ENCODE measurements at regions of chr11 and their contacts with region 1.

Region 1: GRCh38 chr11:59186130-59186594 is 14.2 kb downstream of the DTX4 start:
- DNase-seq: peak; percentile 95
- H3K4me3 Mint-ChIP-seq: peak overlapping the region; percentile 72
- H3K27ac Mint-ChIP-seq: peak overlapping the region; percentile 94
- H3K4me1 Mint-ChIP-seq: peaks cover 82% of the 10 kb centered on the region
- H3K27me3 Mint-ChIP-seq: no peaks in the 10 kb centered on the region
- CTCF ChIP-seq: peak; percentile 91

Region 2: GRCh38 chr11:58845366-58845765 is 340.8 kb before region 1 on chr11:
- CTCF ChIA-PET with region 1: no interaction called
- intact Hi-C with region 1: no loop called
- DNase-seq: no peak
- H3K4me3 Mint-ChIP-seq: no peak overlapping the region
- H3K27ac Mint-ChIP-seq: no peak overlapping the region
- H3K4me1 Mint-ChIP-seq: peaks cover 12% of the 10 kb centered on the region
- H3K27me3 Mint-ChIP-seq: peaks cover 12% of the 10 kb centered on the region
- CTCF ChIP-seq: no peak

Region 3: DNA sequence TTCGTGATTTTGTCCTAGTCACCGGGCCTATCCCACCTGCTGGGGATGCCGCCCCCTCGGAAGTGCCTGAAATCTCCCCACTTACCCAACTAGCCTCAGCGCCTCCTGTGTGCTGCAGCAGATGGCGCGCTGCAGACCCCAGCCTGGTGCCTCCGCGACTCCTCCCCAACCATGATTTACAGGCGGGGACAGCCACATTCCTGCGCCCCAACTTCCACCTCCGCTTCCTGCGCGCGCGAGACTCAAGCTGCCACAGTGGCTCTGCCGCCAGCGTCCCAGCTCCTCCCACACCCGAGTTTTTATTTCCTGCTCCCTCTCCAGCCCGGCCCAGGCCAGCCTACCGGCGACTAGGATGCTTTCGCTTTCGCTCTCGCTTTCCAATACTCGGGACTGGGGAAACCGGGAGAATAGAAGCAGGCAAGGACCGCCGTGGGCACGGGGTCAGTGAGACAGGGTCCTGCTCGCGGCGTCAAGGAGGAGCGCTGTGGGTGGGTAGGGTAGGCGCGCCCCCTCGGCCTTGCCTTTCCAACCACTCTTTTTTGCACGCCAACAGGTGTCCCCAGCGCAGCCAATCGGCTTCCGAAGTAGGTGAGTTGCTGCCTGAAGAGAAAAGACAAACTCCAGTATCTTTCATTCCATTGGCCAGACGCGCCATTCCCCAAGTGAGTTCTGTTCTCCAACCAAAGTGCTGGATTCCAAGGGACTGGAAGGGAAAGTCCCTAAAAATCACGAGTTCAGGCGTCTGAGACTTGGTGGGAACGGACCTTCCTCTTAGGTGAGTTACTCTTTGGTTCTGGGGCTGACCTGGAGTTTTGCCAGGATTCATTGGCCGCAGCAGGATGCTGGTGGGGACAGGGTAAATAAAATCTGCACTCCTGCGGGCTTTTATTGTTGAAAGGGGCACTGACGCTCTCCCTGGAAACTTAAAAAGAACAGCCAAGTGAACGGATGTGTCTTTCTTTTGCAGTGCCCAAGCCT is 43.3 kb before region 1 on chr11 and contains the start of gene FAM111A:
- CTCF ChIA-PET with region 1: interaction called, 10 read pairs
- intact Hi-C with region 1: no loop called
- DNase-seq: peak; percentile 88
- H3K4me3 Mint-ChIP-seq: peak within 1 kb of the TSS; percentile 97
- H3K27ac Mint-ChIP-seq: peak within 1 kb of the TSS; percentile 93
- H3K4me1 Mint-ChIP-seq: peaks cover 48% of the 10 kb centered on the region
- H3K27me3 Mint-ChIP-seq: no peaks in the 10 kb centered on the region
- CTCF ChIP-seq: peak; percentile 14
- total RNA-seq, gene FAM111A: 87.9 and 91.6 TPM in 2 replicates

Region 4: GRCh38 chr11:59171508-59172322 is 14.4 kb before region 1 on chr11 and contains the start of gene DTX4:
- CTCF ChIA-PET with region 1: interaction called, 137 read pairs
- intact Hi-C with region 1: loop called (anchors 1 kb)
- DNase-seq: peak; percentile 96
- H3K4me3 Mint-ChIP-seq: no peak within 1 kb of the TSS
- H3K27ac Mint-ChIP-seq: peak within 1 kb of the TSS; percentile 82
- H3K4me1 Mint-ChIP-seq: peaks cover 24% of the 10 kb centered on the region
- H3K27me3 Mint-ChIP-seq: no peaks in the 10 kb centered on the region
- CTCF ChIP-seq: peak; percentile 78
- total RNA-seq, gene DTX4: 56.7 and 65.8 TPM in 2 replicates

Region 5: DNA sequence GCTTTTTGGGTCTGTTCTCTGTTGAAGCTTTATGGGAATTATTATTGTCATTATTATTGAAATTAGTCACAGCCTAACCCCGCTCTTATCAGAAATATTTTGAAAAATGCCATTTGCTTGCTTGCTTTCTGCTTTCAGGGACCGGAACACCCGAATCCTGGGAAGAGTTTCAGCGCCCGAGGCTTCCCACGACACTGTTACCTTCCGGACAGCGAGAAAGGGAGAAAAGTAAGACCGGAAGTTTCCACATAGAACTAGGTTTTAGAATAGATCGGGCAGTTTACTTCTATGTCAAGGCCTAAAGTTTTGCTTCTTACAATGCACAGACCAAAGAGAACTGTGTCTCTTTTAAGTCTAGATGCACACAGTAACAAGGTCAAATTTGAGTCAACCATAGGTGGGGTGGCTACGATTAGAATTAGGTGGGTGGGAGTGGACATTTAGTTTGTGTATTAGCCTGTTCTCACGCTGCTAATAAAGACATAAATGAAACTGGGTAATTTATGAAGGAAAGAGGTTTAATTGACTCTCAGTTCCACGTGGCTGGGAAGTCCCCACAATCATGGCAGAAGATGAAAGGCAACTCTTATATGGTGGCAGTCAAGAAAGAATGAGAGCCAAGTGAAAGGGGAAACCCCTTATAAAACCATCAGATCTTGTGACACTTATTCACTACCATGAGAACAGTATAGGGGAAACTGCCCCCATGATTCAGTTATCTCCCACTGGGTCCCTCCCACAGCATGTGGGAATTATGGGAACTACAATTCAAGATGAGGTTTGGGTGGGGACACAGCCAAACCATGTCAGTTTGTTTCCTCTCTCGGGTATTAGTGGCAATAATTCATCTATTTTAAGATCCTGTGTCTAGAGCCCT is 13.6 kb after region 1 on chr11:
- CTCF ChIA-PET with region 1: interaction called, 5 read pairs
- intact Hi-C with region 1: loop called (anchors 2 kb)
- DNase-seq: no peak
- H3K4me3 Mint-ChIP-seq: no peak overlapping the region
- H3K27ac Mint-ChIP-seq: no peak overlapping the region
- H3K4me1 Mint-ChIP-seq: peaks cover 8% of the 10 kb centered on the region
- H3K27me3 Mint-ChIP-seq: no peaks in the 10 kb centered on the region
- CTCF ChIP-seq: no peak

Region 6: GRCh38 chr11:59207988-59208451 is 21.9 kb after region 1 on chr11:
- CTCF ChIA-PET with region 1: interaction called, 24 read pairs
- intact Hi-C with region 1: no loop called
- DNase-seq: peak; percentile 34
- H3K4me3 Mint-ChIP-seq: no peak overlapping the region
- H3K27ac Mint-ChIP-seq: peak overlapping the region; percentile 58
- H3K4me1 Mint-ChIP-seq: peaks cover 6% of the 10 kb centered on the region
- H3K27me3 Mint-ChIP-seq: no peaks in the 10 kb centered on the region
- CTCF ChIP-seq: peak; percentile 76

Region 7: DNA sequence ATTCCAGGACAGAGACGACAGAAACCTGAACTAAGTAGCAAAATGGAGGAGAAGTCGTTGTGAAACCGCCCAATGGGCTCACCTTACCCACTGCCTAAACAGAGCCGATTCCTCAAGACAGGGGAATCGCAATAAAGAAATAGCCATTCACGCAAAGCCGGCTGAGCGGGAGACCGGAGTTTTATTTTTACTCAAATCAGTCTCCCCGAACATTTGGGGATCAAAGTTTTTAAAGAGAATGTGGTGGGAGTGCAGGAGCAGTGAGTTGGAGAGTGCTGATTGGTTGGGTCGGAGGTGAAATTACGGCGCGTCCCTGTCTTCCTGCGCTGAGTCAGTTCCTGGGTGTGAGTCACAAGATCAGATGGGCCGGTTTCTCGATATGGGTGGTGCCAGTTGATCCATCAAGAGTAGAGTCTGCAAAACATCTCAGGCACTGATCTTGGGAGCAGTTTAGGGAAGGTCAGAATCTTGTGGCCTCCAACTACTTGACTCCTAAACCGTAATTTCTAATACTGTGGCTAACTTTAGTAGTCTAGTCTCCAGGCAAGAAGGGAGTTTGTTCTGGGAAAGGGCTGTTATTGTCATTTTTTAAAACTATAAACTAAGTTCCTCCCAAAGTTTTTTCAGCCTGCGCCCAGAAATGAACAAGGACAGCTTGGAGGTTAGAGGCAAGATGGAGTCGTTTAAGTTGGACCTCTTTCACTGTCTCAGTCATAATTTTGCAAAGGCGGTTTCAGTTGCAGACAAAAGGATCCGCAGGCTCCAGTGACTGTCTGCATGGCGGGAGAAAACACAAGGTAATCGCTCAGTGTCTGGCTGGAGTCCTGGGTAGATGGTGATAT is 359.2 kb after region 1 on chr11:
- CTCF ChIA-PET with region 1: no interaction called
- intact Hi-C with region 1: loop called (anchors 5 kb)
- DNase-seq: peak; percentile 83
- H3K4me3 Mint-ChIP-seq: peak overlapping the region; percentile 63
- H3K27ac Mint-ChIP-seq: peak overlapping the region; percentile 99
- H3K4me1 Mint-ChIP-seq: peaks cover 44% of the 10 kb centered on the region
- H3K27me3 Mint-ChIP-seq: peaks cover under 1% of the 10 kb centered on the region
- CTCF ChIP-seq: no peak